Pancreas (tissue), 10 donors: ENCODE measurements at regions of chr15 and their contacts with region 1.

Region 1: GRCh38 chr15:31488426-31489204 is 162.0 kb downstream of the KLF13 start:
- DNase-seq: peak in 4 of 6 donors; percentile 44 to 70 (median 56)
- ATAC-seq: peak; percentile 80 to 95 (median 92)
- H3K4me3 ChIP-seq: no peak overlapping the region
- H3K27ac ChIP-seq: peak overlapping the region in 1 of 4 donors; percentile 20
- H3K4me1 ChIP-seq: peaks cover 0 to 9% (median 8%) of the 10 kb centered on the region in 3 donors
- H3K27me3 ChIP-seq: no peaks in the 10 kb centered on the region
- CTCF ChIP-seq: peak; percentile 28 to 91 (median 84)

Region 2: DNA sequence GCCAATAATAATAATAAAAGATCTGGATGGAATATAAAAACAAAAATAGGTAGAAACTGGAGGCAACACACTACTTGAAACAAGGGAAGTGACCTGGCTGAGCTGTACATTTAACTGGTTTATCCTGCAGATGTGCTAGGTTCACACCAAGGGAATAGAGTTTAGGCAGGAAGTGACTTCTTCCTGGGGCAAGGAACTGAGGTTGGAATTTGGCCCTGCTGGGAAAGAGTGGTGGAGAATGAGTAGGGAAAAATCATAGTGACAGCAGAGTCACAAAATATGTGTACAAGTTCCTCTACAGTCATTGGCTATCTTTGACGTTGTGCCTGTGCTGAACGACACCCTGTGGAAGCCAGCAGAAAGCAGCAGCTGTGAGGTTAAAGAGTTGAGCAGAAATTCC is 818.6 kb before region 1 on chr15:
- intact Hi-C with region 1: loop called in 1 of 3 experiments (anchors 10 kb)
- DNase-seq: no peak
- ATAC-seq: no peak
- H3K4me3 ChIP-seq: no peak overlapping the region
- H3K27ac ChIP-seq: no peak overlapping the region
- H3K4me1 ChIP-seq: no peaks in the 10 kb centered on the region
- H3K27me3 ChIP-seq: no peaks in the 10 kb centered on the region
- CTCF ChIP-seq: no peak

Region 3: DNA sequence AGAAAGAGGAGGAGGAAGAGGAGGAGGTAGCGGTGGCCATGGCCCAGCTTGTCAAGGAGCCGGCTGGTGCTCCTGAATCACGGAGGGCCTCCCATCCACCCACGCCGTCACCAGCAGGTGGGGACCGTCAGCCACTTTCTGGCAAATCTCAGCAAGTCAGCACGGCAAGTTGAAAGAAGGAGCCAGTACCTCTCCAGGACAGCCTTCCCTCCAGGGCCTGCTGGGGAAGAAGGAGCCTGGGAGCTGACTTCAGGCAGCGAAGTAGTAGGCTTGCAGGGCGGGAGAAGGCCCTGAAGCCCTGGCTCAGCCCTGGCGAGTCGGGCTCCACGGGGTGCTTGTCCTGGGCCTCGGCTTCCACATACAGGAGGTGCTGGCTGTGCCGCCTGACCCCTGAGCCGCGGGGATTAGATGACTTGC is 287.9 kb before region 1 on chr15:
- intact Hi-C with region 1: loop called in 1 of 3 experiments (anchors 5 kb)
- DNase-seq: peak in 4 of 6 donors; percentile 44 to 73 (median 50)
- ATAC-seq: peak in 3 of 4 donors; percentile 72 to 88 (median 73)
- H3K4me3 ChIP-seq: no peak overlapping the region
- H3K27ac ChIP-seq: no peak overlapping the region
- H3K4me1 ChIP-seq: no peaks in the 10 kb centered on the region
- H3K27me3 ChIP-seq: no peaks in the 10 kb centered on the region
- CTCF ChIP-seq: no peak

Region 4: DNA sequence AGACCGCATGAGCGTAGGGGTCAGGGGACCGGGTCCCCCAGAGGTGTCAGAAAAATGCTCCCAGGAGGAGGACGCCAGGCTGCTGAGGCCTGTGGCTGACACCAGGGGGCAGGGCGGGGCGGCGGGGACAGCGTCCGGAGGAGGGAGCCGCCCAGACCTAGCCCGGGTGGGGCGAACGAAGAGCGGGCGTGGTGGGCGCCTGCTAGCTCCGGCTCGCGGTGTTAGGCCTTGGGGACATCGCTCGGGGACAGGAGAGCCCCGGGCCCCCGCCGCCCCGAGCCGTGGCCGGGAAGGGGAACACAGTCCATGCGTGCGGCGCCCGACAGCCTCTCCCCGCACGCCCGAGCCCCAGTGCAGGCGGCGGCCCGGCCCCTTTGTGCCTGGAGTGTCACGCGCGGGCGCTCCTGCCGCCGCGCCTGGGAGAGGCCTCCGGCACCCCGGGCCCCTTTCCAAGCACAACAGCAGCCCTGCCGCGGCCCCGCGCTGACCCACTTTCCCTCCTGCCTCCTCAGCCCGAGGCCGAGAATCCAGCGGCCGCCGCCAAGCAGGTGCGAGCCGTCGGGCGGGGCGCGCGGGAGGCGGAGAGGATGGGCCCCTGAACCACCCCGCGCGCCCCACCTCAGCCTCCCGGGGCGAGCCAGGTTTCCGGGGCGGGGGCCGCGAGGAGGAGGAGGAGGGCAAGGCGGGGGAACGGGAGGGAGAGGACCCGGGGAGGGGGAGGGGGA is 273.0 kb before region 1 on chr15:
- intact Hi-C with region 1: loop called in 1 of 3 experiments (anchors 5 kb)
- DNase-seq: peak; percentile 71 to 94 (median 78)
- ATAC-seq: peak; percentile 91 to 93 (median 92)
- H3K4me3 ChIP-seq: peak overlapping the region; percentile 40 to 75 (median 50)
- H3K27ac ChIP-seq: peak overlapping the region; percentile 62 to 93 (median 84)
- H3K4me1 ChIP-seq: peaks cover 0 to 6% (median 5%) of the 10 kb centered on the region in 3 donors
- H3K27me3 ChIP-seq: no peaks in the 10 kb centered on the region
- CTCF ChIP-seq: peak; percentile 51 to 88 (median 84)